ENCODE measurements at regions of chr9 and their contacts with region 1.

Region 1: GRCh38 chr9:121107041-121107440 is 32.3 kb downstream of the CNTRL start:
- DNase-seq: no peak
- H3K4me3 Mint-ChIP-seq: no peak overlapping the region
- H3K27ac Mint-ChIP-seq: no peak overlapping the region
- H3K4me1 Mint-ChIP-seq: peaks cover 22% of the 10 kb centered on the region
- H3K27me3 Mint-ChIP-seq: no peaks in the 10 kb centered on the region

Region 2: GRCh38 chr9:121023064-121023463 is 84.0 kb before region 1 on chr9:
- intact Hi-C with region 1: no loop called
- DNase-seq: no peak
- H3K4me3 Mint-ChIP-seq: no peak overlapping the region
- H3K27ac Mint-ChIP-seq: no peak overlapping the region
- H3K4me1 Mint-ChIP-seq: no peaks in the 10 kb centered on the region
- H3K27me3 Mint-ChIP-seq: peaks cover 3% of the 10 kb centered on the region

Region 3: GRCh38 chr9:121171236-121171635 is 64.2 kb after region 1 on chr9:
- intact Hi-C with region 1: loop called (anchors 5 kb)
- DNase-seq: no peak
- H3K4me3 Mint-ChIP-seq: no peak overlapping the region
- H3K27ac Mint-ChIP-seq: no peak overlapping the region
- H3K4me1 Mint-ChIP-seq: peaks cover 15% of the 10 kb centered on the region
- H3K27me3 Mint-ChIP-seq: no peaks in the 10 kb centered on the region

Measured in activated T-helper 1 cell treated with anti-CD3 and anti-CD28 coated beads, Interleukin-12 subunit alpha, Interleukin-12 subunit beta, Interleukin-2, Interleukin-4 antibody, amounts not matched to agents 30 ng/mL and 10 ng/mL and 1 ng/mL, durations not matched to agents 14 hours and 24 hours and 36 hours (primary cell).